ENCODE measurements at regions of chr3 and their contacts with region 1.

Region 1: GRCh38 chr3:132659365-132660051 is at the start of gene ACAD11:
- DNase-seq: peak; percentile 89
- H3K4me3 ChIP-seq: peak within 1 kb of the TSS; percentile 76 to 96 (median 84)
- H3K27ac ChIP-seq: peak within 1 kb of the TSS; percentile 89 to 95 (median 92)
- H3K4me1 ChIP-seq: peaks cover 0 to 31% (median 17%) of the 10 kb centered on the region in 4 donors
- H3K27me3 ChIP-seq: no peaks in the 10 kb centered on the region
- CTCF ChIP-seq: peak; percentile 52 to 79 (median 68)
- EP300 ChIP-seq: no peak
- POLR2A ChIP-seq: peak in 1 of 2 donors; percentile 17
- total RNA-seq, gene ACAD11: 26.8 to 71.7 (median 35.4) TPM

Region 2: GRCh38 chr3:132709761-132710160 is 50.3 kb after region 1 on chr3:
- intact Hi-C with region 1: loop called (anchors 10 kb)
- DNase-seq: no peak
- H3K4me3 ChIP-seq: no peak overlapping the region
- H3K27ac ChIP-seq: no peak overlapping the region
- H3K4me1 ChIP-seq: no peaks in the 10 kb centered on the region
- H3K27me3 ChIP-seq: no peaks in the 10 kb centered on the region
- CTCF ChIP-seq: no peak
- EP300 ChIP-seq: no peak
- POLR2A ChIP-seq: no peak

Region 3: DNA sequence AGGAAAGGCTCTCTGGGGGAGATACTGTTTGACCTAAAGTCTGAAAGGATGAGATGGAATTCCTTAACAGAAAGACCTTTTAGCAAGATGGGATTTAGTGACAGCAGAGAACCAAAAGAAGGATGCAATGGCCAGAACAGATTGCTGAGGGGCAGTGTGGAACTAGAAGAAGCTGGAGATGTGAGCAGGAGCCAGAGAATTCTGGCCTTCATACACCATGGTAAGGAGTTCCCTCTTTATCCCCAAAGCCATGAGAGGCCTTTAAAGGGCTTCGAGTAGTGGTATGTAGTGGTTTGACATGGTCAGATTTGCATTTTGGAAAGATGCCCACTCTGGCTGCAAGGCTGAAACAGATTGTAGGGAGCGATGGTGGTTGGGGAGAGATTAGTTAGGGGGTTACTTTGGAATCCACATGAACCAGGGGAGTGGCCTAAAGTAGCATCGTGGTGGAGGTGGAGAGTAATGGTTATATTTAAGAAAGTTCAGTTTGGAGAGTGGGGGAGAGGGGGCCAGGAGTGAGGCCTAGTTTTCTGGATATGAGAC is 96.7 kb after region 1 on chr3:
- intact Hi-C with region 1: no loop called
- DNase-seq: no peak
- H3K4me3 ChIP-seq: no peak overlapping the region
- H3K27ac ChIP-seq: no peak overlapping the region
- H3K4me1 ChIP-seq: no peaks in the 10 kb centered on the region
- H3K27me3 ChIP-seq: no peaks in the 10 kb centered on the region
- CTCF ChIP-seq: no peak
- EP300 ChIP-seq: no peak
- POLR2A ChIP-seq: no peak

Region 4: DNA sequence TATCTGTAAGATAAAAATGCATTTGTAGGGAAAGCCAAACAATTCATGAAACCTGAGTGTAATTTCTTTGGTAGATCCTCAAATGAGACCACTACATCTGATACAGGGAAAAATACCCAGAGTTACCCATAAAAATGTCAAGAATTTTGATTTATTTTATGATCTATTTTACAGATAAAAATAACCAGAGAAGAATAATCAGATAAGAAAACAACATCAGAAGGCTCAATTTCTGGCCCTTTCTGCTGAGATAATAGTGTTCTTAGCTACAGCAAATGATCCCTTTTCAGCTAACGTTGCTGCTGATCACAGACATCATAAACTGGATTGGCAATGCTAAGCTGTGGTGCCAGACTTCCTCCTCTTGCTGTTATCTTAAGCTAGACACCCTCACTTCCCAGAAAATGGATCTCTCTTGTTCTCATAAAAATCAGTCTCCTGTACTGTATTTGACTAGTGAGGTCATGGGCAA is 357.4 kb after region 1 on chr3:
- intact Hi-C with region 1: no loop called
- DNase-seq: no peak
- H3K4me3 ChIP-seq: no peak overlapping the region
- H3K27ac ChIP-seq: no peak overlapping the region
- H3K4me1 ChIP-seq: no peaks in the 10 kb centered on the region
- H3K27me3 ChIP-seq: no peaks in the 10 kb centered on the region
- CTCF ChIP-seq: no peak
- EP300 ChIP-seq: no peak
- POLR2A ChIP-seq: no peak

Region 5: DNA sequence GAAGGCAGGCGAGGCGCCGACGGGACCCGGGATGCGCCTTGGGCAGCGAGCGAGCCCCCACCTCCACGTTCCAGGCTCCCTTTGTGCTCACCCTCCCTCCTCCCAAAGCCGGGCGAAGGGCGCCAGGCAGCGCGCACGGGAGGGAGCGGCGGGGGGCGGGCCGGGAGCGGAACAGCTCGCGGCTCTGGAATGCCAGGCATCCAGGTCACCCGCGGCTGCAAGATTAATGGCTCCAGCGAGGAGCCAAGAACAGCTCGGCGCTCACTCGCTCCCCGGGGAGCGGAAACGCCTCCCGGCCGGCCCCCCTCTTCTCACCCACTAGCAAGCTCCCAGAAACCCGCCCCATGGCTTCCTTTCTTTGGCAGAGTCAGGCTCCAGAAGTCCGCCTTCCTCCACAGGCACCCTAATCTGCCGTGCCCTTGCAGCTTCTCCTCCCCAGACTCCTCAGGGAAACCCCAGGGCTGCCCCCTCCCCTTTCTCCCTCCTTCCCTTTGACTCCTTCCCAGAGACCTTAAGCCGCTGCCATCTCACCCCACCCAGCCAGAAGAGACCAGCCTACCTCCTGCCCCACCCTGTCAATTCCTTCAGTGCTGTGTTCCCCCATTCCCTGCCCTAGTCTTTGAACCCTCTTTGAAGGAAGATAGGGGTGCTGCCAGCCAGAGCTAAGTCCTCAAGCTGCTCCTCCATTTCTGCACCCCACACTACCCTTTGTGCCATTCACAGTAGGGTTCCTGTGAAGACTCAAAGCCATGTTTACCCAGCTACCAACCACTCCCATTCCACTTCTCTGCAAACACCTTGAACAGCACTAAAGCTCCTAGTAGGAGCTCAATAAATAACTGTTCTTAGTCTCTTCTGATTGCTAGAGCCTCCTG is 1704.8 kb after region 1 on chr3:
- intact Hi-C with region 1: loop called (anchors 5 kb)
- DNase-seq: peak; percentile 98
- H3K4me3 ChIP-seq: peak overlapping the region; percentile 10 to 37 (median 26)
- H3K27ac ChIP-seq: peak overlapping the region; percentile 98 to 100 (median 100)
- H3K4me1 ChIP-seq: peaks cover 0 to 100% (median 98%) of the 10 kb centered on the region in 4 donors
- H3K27me3 ChIP-seq: no peaks in the 10 kb centered on the region
- CTCF ChIP-seq: no peak
- EP300 ChIP-seq: peak in 2 of 4 donors; percentile 39 to 78
- POLR2A ChIP-seq: no peak

Measured in sigmoid colon (tissue), 7 donors.